Panc1 (cell line): ENCODE measurements at regions of chr5 and their contacts with region 1.

Region 1: DNA sequence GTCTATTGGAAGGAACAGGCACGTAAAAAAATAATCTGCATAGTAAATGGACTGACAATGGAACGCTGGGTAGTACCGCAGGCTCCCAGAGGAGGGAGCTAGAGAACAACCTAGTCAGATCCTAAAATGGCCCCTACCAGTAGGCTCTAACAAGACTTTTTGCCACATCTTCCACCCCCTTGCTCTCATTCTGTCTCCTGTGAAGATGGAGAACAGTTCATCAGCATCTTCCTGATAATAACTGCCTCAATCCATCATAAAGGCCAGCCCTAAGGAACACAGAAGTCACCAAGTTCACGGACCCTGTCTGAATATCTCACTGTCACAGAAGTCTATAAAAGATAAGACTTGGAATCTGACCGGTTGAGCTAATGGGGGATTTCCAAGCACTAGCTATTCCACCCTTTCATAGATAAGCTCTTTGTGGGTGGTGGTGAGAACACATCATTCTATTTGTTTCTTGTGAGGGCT is 133.4 kb downstream of the SLC1A3 start:
- DNase-seq: peak; percentile 76
- ATAC-seq: peak; percentile 44; the same call in 1 of the 2 replicates
- H3K4me3 ChIP-seq: no peak overlapping the region
- H3K27ac ChIP-seq: no peak overlapping the region
- H3K4me1 ChIP-seq: no peaks in the 10 kb centered on the region
- H3K27me3 ChIP-seq: peaks cover 21% of the 10 kb centered on the region
- CTCF ChIP-seq: peak; percentile 89

Region 2: GRCh38 chr5:36241631-36242533 is 497.9 kb before region 1 on chr5 and contains the start of gene NADK2:
- CTCF ChIA-PET with region 1: no interaction called
- POLR2A ChIA-PET with region 1: interaction called, 10 read pairs
- in situ Hi-C with region 1: no loop called
- intact Hi-C with region 1: no loop called
- DNase-seq: peak; percentile 85
- ATAC-seq: peak; percentile 92
- H3K4me3 ChIP-seq: peak within 1 kb of the TSS; percentile 79
- H3K27ac ChIP-seq: peak within 1 kb of the TSS; percentile 80
- H3K4me1 ChIP-seq: peaks cover 25% of the 10 kb centered on the region
- H3K27me3 ChIP-seq: no peaks in the 10 kb centered on the region
- CTCF ChIP-seq: peak; percentile 80
- total RNA-seq, gene NADK2: 22.5 TPM

Region 3: DNA sequence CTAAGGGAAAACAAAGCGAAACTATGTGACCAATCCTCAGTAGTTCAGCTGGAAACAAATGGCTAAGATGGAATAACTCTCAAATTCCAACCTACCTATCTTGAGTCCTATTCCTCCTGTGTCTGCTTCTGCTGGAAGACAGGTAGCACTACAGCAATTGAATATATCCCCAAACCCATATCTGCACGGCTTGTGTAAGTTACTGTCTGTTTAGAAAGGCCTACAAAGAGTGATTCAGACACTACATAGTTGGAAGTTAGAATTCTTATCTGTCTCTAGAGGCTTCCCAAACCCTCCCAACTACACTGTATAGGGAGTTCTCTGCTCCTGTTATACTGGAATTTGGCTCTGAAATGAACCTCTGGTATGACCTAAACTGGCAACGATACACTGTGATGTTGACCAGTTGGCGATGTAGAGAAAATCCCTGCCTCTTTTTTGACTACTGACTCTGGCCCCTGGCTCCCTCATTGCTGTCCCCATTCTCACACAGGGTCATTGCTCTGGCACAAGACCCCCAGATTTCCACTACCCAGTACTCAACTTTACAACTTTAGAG is 475.5 kb before region 1 on chr5:
- CTCF ChIA-PET with region 1: interaction called, 10 read pairs
- POLR2A ChIA-PET with region 1: no interaction called
- in situ Hi-C with region 1: no loop called
- intact Hi-C with region 1: no loop called
- DNase-seq: no peak
- ATAC-seq: no peak
- H3K4me3 ChIP-seq: no peak overlapping the region
- H3K27ac ChIP-seq: no peak overlapping the region
- H3K4me1 ChIP-seq: no peaks in the 10 kb centered on the region
- H3K27me3 ChIP-seq: 0 out of 2 replicates have a peak, but pooled peaks cover 2% of the 10 kb centered on the region
- CTCF ChIP-seq: no peak

Region 4: GRCh38 chr5:36569491-36569890 is 170.3 kb before region 1 on chr5:
- CTCF ChIA-PET with region 1: no interaction called
- POLR2A ChIA-PET with region 1: no interaction called
- in situ Hi-C with region 1: no loop called
- intact Hi-C with region 1: no loop called
- DNase-seq: no peak
- ATAC-seq: no peak
- H3K4me3 ChIP-seq: no peak overlapping the region
- H3K27ac ChIP-seq: no peak overlapping the region
- H3K4me1 ChIP-seq: no peaks in the 10 kb centered on the region
- H3K27me3 ChIP-seq: peaks cover 5% of the 10 kb centered on the region; the same call in 1 of the 2 replicates
- CTCF ChIP-seq: no peak

Region 5: DNA sequence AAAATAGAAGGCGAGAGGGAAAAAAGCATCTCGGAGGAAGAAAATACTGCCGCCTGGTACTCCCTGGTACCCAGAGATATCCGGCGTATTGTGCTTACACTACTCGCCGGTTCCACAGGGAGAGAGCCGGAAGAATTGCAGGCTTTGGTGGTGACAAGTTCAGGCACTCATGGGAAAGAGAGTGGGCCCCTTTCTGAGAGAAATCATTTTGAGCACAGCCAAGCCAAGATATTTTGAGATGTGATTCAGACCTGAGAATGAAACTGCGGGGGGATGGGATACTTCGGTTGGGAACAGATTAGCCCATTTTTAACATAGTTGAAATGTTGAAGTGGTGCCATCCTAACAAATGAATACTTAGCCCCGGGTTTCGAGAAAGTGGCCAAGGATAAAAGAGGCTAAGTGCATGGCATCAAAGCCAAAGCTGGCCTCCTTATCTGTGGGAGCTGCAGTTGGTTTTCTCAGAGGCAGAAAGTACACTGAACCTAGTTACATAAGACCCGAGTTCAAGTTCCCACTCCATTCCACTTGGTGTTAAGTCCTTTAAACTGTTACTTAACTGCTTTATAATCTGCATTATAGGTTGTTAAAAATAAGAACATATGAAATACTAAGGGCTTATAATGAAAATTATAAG is 70.7 kb before region 1 on chr5:
- CTCF ChIA-PET with region 1: no interaction called
- POLR2A ChIA-PET with region 1: no interaction called
- in situ Hi-C with region 1: no loop called
- intact Hi-C with region 1: no loop called
- DNase-seq: no peak
- ATAC-seq: no peak
- H3K4me3 ChIP-seq: no peak overlapping the region
- H3K27ac ChIP-seq: no peak overlapping the region
- H3K4me1 ChIP-seq: no peaks in the 10 kb centered on the region
- H3K27me3 ChIP-seq: peaks cover 3% of the 10 kb centered on the region
- CTCF ChIP-seq: no peak

Region 6: DNA sequence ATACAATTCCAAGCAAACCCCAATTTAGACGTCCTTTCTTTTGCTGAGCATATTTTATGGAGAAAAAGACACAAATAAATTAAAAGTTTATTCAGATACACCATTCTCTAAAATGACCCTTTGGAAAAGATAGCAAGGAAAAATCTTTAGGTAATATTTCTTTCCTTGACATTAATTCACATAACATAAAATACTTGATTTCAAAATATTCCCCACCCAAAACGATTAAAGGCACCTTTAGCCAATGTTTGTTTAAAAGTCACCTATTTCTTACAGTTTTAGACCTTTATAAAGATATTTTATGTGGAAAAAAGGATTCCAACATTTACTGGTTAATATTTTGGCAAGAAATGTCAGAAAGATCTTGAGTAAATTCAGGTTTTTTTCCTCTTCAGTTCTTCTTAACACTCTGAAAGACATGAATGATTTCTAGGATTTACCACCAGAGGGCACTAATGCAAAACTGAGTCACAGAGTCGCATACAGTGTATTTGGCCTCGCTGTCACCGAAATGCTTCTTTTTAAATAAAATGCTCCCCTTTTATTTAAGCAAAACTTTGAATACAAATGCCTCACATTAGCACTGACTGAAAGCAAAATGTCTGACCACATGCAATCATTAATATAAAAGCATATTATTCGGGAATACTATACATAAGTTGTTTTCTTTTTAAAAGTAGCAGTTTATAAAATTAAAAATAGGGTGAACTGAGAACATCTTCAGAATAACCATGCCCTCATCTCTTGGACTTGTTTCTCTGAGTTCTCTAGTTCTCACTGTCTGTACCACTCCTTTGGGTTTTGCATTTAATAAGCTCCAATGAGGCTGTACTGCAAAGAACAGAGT is 10.9 kb before region 1 on chr5:
- CTCF ChIA-PET with region 1: interaction called, 10 read pairs
- POLR2A ChIA-PET with region 1: no interaction called
- in situ Hi-C with region 1: no loop called
- intact Hi-C with region 1: no loop called
- DNase-seq: peak; percentile 58
- ATAC-seq: peak; percentile 84
- H3K4me3 ChIP-seq: no peak overlapping the region
- H3K27ac ChIP-seq: no peak overlapping the region
- H3K4me1 ChIP-seq: no peaks in the 10 kb centered on the region
- H3K27me3 ChIP-seq: no peaks in the 10 kb centered on the region; the same call in 1 of the 2 replicates
- CTCF ChIP-seq: peak; percentile 76; the same call in 1 of the 2 replicates

Region 7: GRCh38 chr5:36870399-36871040 is 130.7 kb after region 1 on chr5:
- CTCF ChIA-PET with region 1: no interaction called
- POLR2A ChIA-PET with region 1: no interaction called
- in situ Hi-C with region 1: no loop called
- intact Hi-C with region 1: loop called (anchors 5 kb)
- DNase-seq: no peak
- ATAC-seq: peak; percentile 81
- H3K4me3 ChIP-seq: no peak overlapping the region
- H3K27ac ChIP-seq: no peak overlapping the region
- H3K4me1 ChIP-seq: peaks cover 23% of the 10 kb centered on the region
- H3K27me3 ChIP-seq: no peaks in the 10 kb centered on the region
- CTCF ChIP-seq: peak; percentile 73; the same call in 1 of the 2 replicates

Region 8: GRCh38 chr5:36944607-36945225 is 204.9 kb after region 1 on chr5:
- CTCF ChIA-PET with region 1: interaction called, 3 read pairs
- POLR2A ChIA-PET with region 1: interaction called, 5 read pairs
- in situ Hi-C with region 1: no loop called
- intact Hi-C with region 1: loop called (anchors 10 kb)
- DNase-seq: peak; percentile 41
- ATAC-seq: no peak
- H3K4me3 ChIP-seq: no peak overlapping the region
- H3K27ac ChIP-seq: no peak overlapping the region
- H3K4me1 ChIP-seq: peaks cover 19% of the 10 kb centered on the region
- H3K27me3 ChIP-seq: no peaks in the 10 kb centered on the region
- CTCF ChIP-seq: peak; percentile 64; the same call in 1 of the 2 replicates

Region 9: GRCh38 chr5:37005946-37006540 is 266.3 kb after region 1 on chr5:
- CTCF ChIA-PET with region 1: interaction called, 5 read pairs
- POLR2A ChIA-PET with region 1: no interaction called
- in situ Hi-C with region 1: no loop called
- intact Hi-C with region 1: loop called (anchors 5 kb)
- DNase-seq: no peak
- ATAC-seq: peak; percentile 73
- H3K4me3 ChIP-seq: no peak overlapping the region
- H3K27ac ChIP-seq: no peak overlapping the region
- H3K4me1 ChIP-seq: peaks cover 9% of the 10 kb centered on the region
- H3K27me3 ChIP-seq: no peaks in the 10 kb centered on the region
- CTCF ChIP-seq: peak; percentile 64; the same call in 1 of the 2 replicates